ENCODE measurements at regions of chr19 and their contacts with region 1.

Region 1: DNA sequence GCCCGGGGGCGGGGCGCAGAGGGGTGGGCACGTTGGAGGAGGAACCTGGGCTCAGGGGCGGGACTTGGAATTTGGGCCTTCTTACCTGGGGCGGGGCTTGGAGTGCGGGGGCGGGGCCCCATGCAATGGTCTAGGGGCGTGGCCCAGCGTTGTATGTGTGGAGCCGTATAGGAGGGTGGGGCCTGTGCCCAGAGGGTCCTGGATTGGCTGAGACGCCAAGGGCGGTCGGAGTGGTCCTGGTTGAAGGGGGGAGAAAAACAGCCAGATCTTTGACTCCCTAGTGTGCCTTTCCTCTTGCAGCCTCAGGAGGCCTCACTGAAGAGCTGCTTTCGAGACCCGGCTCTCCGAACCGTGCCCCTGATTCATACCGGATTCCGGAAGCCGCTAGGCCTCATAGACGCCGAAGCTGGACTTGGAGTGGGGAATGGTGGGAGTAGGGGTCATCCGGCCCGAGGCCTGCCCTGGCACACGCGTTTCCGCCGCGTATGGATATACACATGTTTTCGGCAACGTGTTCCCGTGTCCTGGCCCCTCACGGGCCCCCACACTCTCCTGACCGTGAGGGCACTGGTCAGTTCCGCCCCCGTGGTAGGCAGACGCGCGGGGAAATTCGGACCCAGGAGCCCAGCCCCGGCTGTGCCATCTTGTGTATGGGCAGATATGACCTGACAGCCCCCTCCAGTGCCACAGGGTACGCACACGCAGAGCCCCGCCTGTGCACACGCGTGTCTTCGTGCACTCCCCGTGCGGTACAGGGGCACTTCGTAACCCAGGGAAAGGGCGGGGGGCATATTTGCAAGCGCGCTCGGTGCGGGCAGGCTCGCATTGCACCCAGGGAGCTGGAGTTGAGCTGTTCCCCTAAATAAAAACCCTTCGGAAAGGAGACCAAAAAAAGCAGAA is 661 bp upstream of the PRR12 start:
- DNase-seq: peak; percentile 98

Region 2: DNA sequence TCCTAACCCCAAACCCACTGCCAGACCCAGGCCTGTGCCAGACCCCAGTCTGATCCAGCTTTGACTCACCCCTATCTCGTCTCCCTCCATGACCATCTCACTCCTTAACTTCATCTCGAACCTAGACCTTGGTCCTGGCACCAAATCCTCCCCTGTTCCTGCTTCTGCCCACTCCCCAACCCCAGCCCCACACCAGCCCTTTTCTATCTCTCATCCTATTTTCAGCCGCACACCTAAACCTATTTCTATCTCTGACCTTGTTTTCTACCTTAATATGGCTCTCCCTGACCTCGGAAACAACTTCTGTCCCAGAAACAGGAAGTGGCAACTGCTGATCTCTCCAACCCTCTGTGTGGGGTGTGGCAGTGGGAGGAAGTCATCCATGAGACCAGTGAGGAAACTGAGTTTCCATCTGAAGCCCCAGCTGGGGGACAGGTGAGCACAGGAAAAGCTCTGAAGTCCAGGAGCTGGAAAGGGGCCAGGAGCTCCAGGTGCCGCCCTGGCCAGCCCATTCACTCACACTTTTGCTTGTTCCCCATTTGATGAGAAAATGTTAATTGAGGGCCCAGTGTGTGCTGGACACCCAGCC is 180.8 kb before region 1 on chr19:
- intact Hi-C with region 1: no loop called
- DNase-seq: no peak

Region 3: DNA sequence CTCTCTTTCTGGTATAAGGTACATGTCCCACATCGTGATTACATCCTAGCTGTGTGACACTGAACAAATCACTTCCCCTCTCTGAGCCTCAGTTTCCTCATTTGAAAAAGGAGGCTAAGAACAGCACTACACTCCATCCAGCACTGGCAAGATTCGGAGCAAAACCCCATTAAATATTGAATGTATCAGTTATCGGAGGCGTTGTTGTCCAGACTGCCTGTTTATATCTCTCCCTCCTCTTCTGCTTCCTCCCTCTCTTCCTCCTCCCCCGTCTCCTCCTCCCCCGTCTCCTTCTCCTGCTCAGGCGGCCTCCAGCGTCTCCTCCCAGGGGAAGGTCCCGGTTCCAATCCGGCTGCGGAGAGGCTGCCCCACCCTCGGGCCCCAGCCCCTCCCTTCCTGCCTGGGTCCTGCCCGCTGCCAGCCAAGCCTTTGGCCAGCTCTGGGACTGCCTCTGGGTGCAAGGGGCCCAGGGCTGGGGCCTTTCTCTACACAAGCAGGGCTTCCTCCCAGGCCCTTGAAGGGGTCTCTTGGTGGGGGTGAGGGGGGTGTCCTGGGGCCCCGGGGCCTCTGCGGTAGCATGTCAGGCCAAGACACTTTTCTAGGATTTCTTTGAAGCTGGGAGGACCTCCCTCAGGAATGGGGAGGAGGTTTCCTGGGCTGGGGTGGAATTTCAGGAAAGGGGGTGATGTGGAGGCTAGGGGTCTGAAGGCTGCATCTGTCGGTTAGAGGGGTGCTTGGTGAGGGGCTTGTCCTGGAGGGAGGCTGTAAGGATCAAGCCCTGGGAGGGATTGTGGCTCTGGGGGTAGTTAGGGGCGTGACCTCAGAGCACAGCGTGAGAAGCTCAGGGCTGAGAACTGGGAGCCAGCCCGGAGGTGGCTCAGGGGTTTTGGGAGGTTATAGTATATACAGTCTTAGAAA is 47.8 kb after region 1 on chr19:
- intact Hi-C with region 1: loop called (anchors 5 kb)
- DNase-seq: peak; percentile 95

Measured in posterior vena cava (tissue), 2 donors.